H1 (cell line): ENCODE measurements at regions of chr6 and their contacts with region 1.

Region 1: DNA sequence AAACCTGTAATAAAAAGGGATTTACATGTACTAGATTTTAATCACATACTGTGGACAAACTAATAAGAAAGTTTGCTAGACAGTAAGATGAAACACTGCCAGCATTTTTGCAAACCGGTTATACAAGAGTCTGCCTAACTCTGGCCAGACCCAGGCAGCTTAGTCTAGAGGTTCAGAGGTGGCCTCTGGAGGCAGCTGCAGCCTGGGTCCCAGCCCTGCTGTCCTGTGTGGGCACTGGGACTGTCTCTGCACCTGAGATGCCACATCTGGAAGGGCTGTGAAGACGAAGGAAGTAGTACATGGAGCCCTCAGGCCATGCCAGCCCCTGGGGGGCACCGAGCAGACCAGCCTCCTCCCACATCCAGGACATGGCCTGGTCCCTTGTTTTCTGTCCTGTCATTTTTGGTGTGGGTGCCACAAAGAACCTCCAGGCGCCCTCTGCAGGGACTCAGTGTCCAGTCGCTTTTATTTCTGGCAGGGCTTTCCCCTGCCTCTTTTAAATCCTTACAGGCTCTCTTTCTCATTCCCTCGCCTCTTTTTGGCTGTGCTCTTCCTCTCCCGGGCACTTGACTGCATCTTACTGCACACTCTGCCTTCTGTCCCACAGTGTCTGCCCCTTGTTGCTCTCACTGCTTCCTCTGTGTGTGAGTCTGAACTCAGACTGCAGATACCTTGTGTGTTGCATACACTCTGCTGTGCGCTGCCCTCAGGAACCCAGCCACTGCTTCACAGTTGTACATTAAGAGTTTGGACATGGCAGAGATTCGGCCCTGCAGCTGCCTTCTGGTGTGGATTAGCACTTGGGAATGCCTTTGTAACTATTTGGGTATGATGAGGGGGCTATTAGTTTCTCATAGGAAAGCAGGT is 216.7 kb downstream of the ZDHHC14 start:
- DNase-seq: peak in 1 of 2 experiments; percentile 71
- H3K4me3 ChIP-seq: no peak overlapping the region
- H3K27ac ChIP-seq: no peak overlapping the region
- H3K4me1 ChIP-seq: peaks cover 0 to 2% (median 0%) of the 10 kb centered on the region in 4 experiments; a peak in 1 of 7 replicates
- H3K27me3 ChIP-seq: no peaks in the 10 kb centered on the region
- CTCF ChIP-seq: peak; percentile 46 to 64 (median 62)
- EP300 ChIP-seq: no peak
- POLR2A ChIP-seq: no peak
- RAD21 ChIP-seq: peak; percentile 68 to 80

Region 2: GRCh38 chr6:157323255-157323965 is 274.3 kb before region 1 on chr6 and contains the start of gene TMEM242:
- CTCF ChIA-PET with region 1: interaction called, 13 read pairs
- POLR2A ChIA-PET with region 1: no interaction called
- DNase-seq: peak in 1 of 2 experiments; percentile 98
- H3K4me3 ChIP-seq: peak within 1 kb of the TSS; percentile 87 to 99 (median 94)
- H3K27ac ChIP-seq: peak within 1 kb of the TSS; percentile 81
- H3K4me1 ChIP-seq: no peaks in the 10 kb centered on the region; a peak in 1 of 7 replicates
- H3K27me3 ChIP-seq: peaks cover 0 to 2% (median 0%) of the 10 kb centered on the region in 4 experiments; a peak in 2 of 7 replicates
- CTCF ChIP-seq: peak in 1 of 3 experiments; percentile 11; a peak in 2 of 4 replicates
- EP300 ChIP-seq: peak; percentile 13 to 75; a peak in 2 of 3 replicates
- POLR2A ChIP-seq: peak; percentile 90 to 98
- RAD21 ChIP-seq: no peak; a peak in 1 of 4 replicates
- total RNA-seq, gene TMEM242: 8.2 and 9.0 TPM in 2 replicates

Region 3: DNA sequence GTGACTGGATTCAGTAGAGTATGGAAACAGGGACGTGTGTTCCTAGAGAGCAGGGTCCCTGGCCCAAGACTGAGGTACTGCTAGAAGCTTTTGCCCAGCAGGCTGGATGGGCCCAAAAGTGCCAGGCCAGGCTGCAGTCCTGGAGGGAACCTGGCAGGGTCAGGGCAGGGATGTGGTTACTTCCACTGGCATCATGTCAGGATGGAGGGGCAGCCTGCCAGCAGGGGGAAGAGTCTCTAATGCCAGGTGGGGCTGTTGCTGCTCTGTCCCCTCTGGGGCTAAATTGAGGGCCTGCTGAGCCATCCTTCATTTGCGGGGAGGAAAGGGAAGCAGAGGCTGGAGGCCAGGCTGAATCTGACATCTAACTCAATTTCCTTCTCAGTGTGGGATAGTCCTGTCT is 199.5 kb before region 1 on chr6:
- CTCF ChIA-PET with region 1: interaction called, 15 read pairs
- POLR2A ChIA-PET with region 1: interaction called, 3 read pairs
- DNase-seq: no peak
- H3K4me3 ChIP-seq: no peak overlapping the region
- H3K27ac ChIP-seq: no peak overlapping the region
- H3K4me1 ChIP-seq: peaks cover 0 to 3% (median under 1%) of the 10 kb centered on the region in 4 experiments; a peak in 2 of 7 replicates
- H3K27me3 ChIP-seq: peaks cover 0 to 2% (median 0%) of the 10 kb centered on the region in 4 experiments; a peak in 1 of 7 replicates
- CTCF ChIP-seq: peak; percentile 14 to 42 (median 28); a peak in 3 of 4 replicates
- EP300 ChIP-seq: no peak
- POLR2A ChIP-seq: no peak
- RAD21 ChIP-seq: peak in 1 of 2 experiments; percentile 41; a peak in 1 of 4 replicates

Region 4: DNA sequence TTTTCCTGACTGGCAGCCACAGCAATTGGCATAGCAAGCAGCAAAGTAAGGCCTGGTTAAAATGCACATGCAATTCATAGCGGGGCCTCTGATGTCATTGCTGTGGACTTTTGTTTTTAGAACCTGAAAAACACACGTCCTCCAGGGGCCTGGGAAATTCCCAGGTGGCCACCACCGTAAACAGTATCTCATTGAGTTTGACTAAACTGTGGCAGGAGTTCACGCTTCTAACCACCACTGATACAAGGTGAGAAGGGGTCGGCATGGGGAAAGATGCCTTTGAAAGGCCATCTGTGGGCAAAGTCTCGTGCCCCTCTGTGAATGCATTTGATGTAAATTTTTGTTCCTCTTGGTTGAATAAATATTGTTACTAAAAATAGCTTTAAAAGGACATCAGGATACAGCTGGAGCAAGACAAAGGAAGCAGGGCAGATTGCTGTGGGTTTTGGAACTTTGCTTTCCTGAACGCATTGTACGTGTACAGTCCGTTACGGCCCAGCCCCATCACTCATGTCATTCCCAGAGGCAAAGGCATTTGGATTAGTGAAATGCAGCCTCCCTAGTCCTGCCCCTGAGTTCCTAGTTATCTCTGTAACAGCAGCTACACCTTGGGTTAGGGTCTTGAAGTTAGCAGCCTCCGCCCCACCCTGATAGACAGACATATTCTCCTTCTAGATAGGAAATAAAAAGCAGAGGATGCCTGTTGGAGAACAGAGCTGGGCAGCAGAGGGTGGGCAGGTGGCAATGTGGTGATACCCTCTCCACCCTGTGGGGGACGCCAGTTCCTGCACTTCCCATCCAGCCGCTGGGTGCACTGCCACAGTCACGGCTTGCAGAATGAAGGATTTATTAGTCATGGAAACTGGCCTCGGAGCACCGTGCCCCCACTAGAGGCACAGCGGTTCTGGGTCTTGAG is 136.4 kb before region 1 on chr6:
- CTCF ChIA-PET with region 1: interaction called, 34 read pairs
- POLR2A ChIA-PET with region 1: no interaction called
- DNase-seq: no peak
- H3K4me3 ChIP-seq: no peak overlapping the region
- H3K27ac ChIP-seq: no peak overlapping the region
- H3K4me1 ChIP-seq: peaks cover 0 to 14% (median 0%) of the 10 kb centered on the region in 4 experiments; a peak in 6 of 7 replicates
- H3K27me3 ChIP-seq: no peaks in the 10 kb centered on the region
- CTCF ChIP-seq: peak; percentile 71 to 82 (median 81)
- EP300 ChIP-seq: no peak
- POLR2A ChIP-seq: no peak
- RAD21 ChIP-seq: peak; percentile 70 to 79

Region 5: DNA sequence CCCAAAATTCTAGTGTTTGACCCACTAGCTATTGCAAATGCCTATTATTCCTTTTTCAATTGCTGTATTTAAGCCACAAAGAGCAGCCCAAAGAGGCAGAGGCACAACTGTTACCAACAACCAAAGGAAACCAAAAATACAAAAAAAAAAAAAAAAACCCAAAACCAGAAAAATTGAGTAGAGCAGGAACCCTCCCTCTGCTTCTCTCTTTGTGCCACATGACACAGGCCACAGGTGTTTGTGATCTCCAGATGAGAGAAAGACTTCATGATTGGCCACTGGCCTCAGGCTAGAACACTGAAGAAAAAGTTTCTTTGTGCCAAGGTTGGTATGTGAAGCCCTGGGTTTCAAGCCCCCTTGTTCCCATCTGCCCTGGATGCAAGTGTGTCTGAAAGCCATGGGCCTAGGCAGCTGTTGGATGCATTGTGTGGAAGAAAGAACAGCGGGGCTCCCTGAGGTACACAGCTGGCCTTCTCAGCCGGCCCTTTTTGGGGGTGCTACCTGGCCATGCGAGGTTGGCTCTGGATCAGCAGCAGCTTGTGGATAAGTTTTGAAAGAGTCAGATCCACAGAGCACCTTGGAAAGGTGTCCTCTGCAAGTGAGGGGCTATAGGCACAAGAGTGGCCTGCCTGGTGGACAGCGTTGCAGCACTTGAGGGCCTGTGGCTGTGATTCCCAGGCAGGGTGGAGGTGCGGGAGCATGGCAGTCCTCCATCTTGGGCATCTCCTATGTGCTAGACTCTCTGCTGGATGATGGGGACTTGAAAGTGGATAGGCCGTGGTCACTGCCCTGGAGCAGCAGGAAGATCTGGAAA is 12.2 kb before region 1 on chr6:
- CTCF ChIA-PET with region 1: interaction called, 19 read pairs
- POLR2A ChIA-PET with region 1: interaction called, 6 read pairs
- DNase-seq: no peak
- H3K4me3 ChIP-seq: no peak overlapping the region
- H3K27ac ChIP-seq: no peak overlapping the region
- H3K4me1 ChIP-seq: no peaks in the 10 kb centered on the region
- H3K27me3 ChIP-seq: no peaks in the 10 kb centered on the region
- CTCF ChIP-seq: no peak
- EP300 ChIP-seq: no peak
- POLR2A ChIP-seq: no peak
- RAD21 ChIP-seq: no peak